Activated CD4-positive, alpha-beta memory T cell treated with anti-CD3 and anti-CD28 coated beads for 36 hours (primary cell): ENCODE measurements at regions of chr1 and their contacts with region 1.

Region 1: GRCh38 chr1:230109895-230110667 is 43.0 kb downstream of the GALNT2 start:
- DNase-seq: peak; percentile 92
- H3K4me3 Mint-ChIP-seq: peak overlapping the region; percentile 20
- H3K27ac Mint-ChIP-seq: peak overlapping the region; percentile 86
- H3K4me1 Mint-ChIP-seq: peaks cover 87% of the 10 kb centered on the region
- H3K27me3 Mint-ChIP-seq: no peaks in the 10 kb centered on the region

Region 2: GRCh38 chr1:229893762-229894444 is 216.2 kb before region 1 on chr1:
- CTCF ChIA-PET with region 1: no interaction called
- POLR2A ChIA-PET with region 1: no interaction called
- intact Hi-C with region 1: no loop called
- DNase-seq: no peak
- H3K4me3 Mint-ChIP-seq: no peak overlapping the region
- H3K27ac Mint-ChIP-seq: no peak overlapping the region
- H3K4me1 Mint-ChIP-seq: no peaks in the 10 kb centered on the region
- H3K27me3 Mint-ChIP-seq: peaks cover 40% of the 10 kb centered on the region

Region 3: DNA sequence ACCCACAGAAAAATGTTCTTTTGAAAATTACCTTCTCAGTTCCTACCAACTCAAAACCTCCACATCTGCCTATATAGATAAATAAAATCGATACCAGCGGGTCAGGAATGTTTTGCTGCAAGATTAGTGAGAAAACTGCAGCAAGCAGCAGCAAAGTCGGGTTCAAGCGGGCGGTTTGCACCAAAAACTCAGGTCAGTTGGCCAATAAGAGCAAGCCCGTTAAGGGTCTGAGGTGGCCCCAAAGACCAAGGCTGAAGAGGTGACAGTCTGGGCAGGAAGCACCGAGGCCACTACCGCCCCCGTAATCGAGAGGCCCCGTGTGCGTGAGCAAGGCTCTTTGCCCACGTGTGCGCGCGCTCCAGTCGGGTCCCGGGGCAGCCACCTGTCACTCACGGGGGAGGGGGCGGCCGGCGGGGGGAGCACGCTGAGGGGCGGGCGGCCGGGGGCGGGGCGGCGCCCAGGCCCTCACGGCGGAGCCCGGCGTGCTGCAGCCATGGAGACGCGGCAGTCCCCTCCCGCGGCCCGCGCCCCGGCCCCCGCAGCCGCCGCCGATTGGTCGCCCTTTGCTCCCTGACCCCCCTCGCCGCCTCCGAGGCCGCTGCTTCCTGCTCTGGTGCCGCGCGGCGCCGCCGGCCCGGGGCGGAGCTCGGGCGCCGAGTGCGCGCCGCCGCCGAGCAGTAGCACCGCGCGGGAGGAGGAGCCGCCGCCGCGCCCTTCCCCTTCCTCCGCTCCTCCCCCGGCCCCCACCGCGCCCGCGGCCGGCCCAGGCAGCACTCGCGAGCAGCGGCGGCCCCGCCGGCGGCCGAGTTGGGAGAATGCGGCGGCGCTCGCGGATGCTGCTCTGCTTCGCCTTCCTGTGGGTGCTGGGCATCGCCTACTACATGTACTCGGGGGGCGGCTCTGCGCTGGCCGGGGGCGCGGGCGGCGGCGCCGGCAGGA is 43.3 kb before region 1 on chr1 and contains the start of gene GALNT2:
- CTCF ChIA-PET with region 1: interaction called, 14 read pairs
- POLR2A ChIA-PET with region 1: interaction called, 8 read pairs
- intact Hi-C with region 1: loop called (anchors 1 kb)
- DNase-seq: peak; percentile 92
- H3K4me3 Mint-ChIP-seq: peak within 1 kb of the TSS; percentile 86
- H3K27ac Mint-ChIP-seq: peak within 1 kb of the TSS; percentile 83
- H3K4me1 Mint-ChIP-seq: peaks cover 37% of the 10 kb centered on the region
- H3K27me3 Mint-ChIP-seq: peaks cover 2% of the 10 kb centered on the region
- total RNA-seq, gene GALNT2: 49.5 to 51.0 TPM

Region 4: DNA sequence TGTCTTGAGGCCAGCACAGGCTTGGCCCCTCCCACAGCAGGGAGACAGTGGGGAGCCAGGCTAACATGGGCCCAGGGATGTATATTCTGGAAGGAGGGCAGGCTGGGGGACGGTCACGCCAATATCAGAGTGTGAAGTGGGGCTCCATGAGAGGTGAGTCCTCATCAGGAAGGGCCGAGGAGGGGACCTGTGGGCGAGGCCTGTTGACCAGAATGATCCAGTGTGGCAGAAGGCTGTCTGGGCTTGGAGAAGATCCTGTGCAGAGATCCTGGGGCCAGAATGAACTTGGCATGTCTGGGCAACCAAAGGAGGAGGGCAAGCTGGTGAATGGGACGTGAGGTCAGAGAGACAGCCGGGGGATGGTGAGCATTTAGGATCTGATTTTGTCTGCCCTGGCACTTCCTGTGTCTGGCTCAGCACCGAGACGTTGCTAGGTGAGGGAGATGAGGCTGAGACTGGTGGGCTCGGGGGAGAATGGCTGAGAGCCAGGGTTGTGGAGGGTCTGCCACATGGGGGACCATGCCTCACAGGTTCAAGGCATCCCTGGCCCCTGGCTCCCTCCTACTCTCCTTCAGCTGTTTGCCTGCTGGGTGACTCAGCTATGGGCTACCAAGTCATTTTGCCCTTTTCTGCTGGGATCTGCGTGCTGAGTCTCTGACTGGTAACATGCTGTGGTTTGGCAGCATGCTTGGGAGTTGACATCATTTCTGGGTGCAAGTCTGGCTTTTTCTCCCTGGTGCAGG is 25.8 kb before region 1 on chr1:
- CTCF ChIA-PET with region 1: interaction called, 5 read pairs
- POLR2A ChIA-PET with region 1: interaction called, 27 read pairs
- intact Hi-C with region 1: loop called (anchors 1 kb)
- DNase-seq: peak; percentile 90
- H3K4me3 Mint-ChIP-seq: peak overlapping the region; percentile 33
- H3K27ac Mint-ChIP-seq: peak overlapping the region; percentile 78
- H3K4me1 Mint-ChIP-seq: peaks cover 58% of the 10 kb centered on the region
- H3K27me3 Mint-ChIP-seq: peaks cover 1% of the 10 kb centered on the region

Region 5: GRCh38 chr1:230123280-230124185 is 13.5 kb after region 1 on chr1:
- CTCF ChIA-PET with region 1: interaction called, 22 read pairs
- POLR2A ChIA-PET with region 1: interaction called, 7 read pairs
- intact Hi-C with region 1: loop called (anchors 1 kb)
- DNase-seq: peak; percentile 50
- H3K4me3 Mint-ChIP-seq: no peak overlapping the region
- H3K27ac Mint-ChIP-seq: no peak overlapping the region
- H3K4me1 Mint-ChIP-seq: peaks cover 57% of the 10 kb centered on the region
- H3K27me3 Mint-ChIP-seq: no peaks in the 10 kb centered on the region

Region 6: DNA sequence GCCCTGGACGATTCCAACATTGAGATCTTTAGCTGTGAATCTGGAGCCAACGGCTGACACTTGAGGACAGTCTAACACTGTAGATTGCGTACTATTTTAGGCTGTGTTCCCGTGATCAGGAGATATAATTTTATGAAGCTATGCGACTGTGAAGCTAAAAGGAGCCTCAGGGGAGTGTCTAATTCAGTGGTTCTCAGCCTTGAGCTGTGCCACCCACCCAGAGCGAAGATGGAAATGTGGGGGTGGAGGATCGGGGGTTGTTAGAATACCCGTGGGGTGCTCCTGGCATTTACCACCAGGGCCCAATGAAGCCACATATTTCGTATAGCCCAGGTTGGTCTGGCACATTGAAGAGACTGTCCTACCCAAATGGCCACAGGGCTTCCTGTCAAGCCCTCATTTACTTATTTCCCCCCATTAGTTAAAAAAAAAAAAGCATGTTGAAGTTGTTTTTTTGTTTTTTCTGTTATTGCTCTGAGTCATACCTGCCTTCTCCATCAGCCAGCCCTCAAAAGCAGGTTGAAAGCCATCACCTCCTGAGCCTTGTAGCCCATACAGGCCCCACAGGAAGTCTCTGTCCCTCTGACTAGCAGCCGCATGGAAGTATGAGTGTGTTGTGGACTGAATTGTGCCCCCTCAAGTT is 98.7 kb after region 1 on chr1:
- CTCF ChIA-PET with region 1: no interaction called
- POLR2A ChIA-PET with region 1: no interaction called
- intact Hi-C with region 1: loop called (anchors 1 kb)
- DNase-seq: peak; percentile 74
- H3K4me3 Mint-ChIP-seq: peak overlapping the region; percentile 41
- H3K27ac Mint-ChIP-seq: peak overlapping the region; percentile 92
- H3K4me1 Mint-ChIP-seq: peaks cover 50% of the 10 kb centered on the region
- H3K27me3 Mint-ChIP-seq: no peaks in the 10 kb centered on the region

Region 7: DNA sequence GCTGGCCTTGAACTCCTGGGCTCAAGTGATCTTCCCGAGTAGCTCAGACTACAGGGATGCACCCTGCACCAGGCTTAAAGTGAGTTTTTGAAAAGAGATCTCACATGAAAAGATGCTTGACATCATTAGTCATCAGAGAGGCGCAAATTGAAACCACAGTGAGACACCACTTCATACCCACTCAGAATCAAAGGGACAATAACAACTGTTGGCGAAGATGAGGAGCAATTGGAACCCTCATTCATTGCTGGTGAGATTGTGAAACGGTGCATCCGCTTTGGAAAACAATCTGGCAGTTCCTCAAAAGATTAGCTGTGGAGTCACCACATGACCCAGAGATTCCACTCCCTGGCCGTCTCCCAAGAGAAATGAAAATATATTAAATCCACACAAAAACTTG is 193.7 kb after region 1 on chr1:
- CTCF ChIA-PET with region 1: no interaction called
- POLR2A ChIA-PET with region 1: no interaction called
- intact Hi-C with region 1: loop called (anchors 1 kb)
- DNase-seq: no peak
- H3K4me3 Mint-ChIP-seq: no peak overlapping the region
- H3K27ac Mint-ChIP-seq: no peak overlapping the region
- H3K4me1 Mint-ChIP-seq: peaks cover 25% of the 10 kb centered on the region
- H3K27me3 Mint-ChIP-seq: peaks cover 2% of the 10 kb centered on the region